GM12878 (cell line): ENCODE measurements at regions of chr15 and their contacts with region 1.

Region 1: DNA sequence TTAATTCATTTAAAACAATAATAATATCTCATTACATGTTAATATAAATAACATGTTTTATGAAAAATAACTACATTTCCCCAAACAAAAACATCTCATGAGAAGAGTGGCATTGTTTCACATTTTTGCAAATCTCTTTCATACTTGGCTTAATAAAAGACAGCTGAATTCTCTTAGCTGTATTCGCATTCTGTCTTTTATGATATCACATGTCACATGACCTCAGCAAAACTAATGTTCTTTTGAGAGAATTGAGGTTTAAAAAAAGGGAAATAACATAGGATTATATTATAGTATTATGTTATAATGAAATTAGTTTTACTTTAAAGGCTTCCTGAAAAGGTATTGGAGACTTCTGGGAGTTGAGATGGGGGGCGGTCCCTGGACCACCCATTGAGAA is 48.4 kb upstream of the SPPL2A start:
- DNase-seq: no peak
- ATAC-seq: no peak
- H3K4me3 ChIP-seq: no peak overlapping the region
- H3K27ac ChIP-seq: no peak overlapping the region
- H3K4me1 ChIP-seq: no peaks in the 10 kb centered on the region
- H3K27me3 ChIP-seq: no peaks in the 10 kb centered on the region
- CTCF ChIP-seq: no peak
- EP300 ChIP-seq: no peak
- POLR2A ChIP-seq: no peak
- RAD21 ChIP-seq: no peak

Region 2: DNA sequence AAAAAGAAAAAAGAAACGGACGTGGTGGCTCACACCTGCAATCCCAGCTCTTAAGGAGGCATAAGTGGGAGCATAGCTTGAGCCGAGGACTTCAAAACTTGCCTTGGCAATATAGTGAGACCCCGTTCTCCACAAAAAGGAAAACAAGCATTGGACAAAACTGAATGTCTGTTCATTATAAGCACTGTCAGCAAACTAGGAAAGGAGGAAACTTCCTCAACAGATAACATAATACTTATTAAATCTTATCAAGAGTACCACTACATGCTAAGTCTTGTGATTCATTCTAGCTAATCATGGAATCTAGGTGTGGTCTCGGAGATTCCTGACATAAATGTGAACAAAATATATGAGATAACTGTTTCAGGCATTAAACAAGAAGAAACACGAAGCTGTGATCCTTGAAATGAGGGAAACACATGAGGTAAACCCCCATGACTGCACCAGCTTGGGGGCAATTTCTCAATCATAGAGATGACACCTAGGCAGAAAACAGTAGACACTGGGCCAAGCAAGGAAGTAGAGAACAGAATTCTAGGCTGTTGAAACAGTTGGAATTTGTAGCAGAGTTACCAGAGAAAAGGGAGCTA is 160.6 kb before region 1 on chr15:
- CTCF ChIA-PET with region 1: no interaction called
- POLR2A ChIA-PET with region 1: interaction called, 10 read pairs
- RAD21 ChIA-PET with region 1: no interaction called
- SMC1A ChIA-PET with region 1: no interaction called
- in situ Hi-C with region 1: no loop called
- intact Hi-C with region 1: no loop called
- DNase-seq: no peak
- ATAC-seq: no peak
- H3K4me3 ChIP-seq: no peak overlapping the region
- H3K27ac ChIP-seq: no peak overlapping the region
- H3K4me1 ChIP-seq: peaks cover 7% of the 10 kb centered on the region
- H3K27me3 ChIP-seq: no peaks in the 10 kb centered on the region
- CTCF ChIP-seq: no peak
- EP300 ChIP-seq: no peak
- POLR2A ChIP-seq: no peak
- RAD21 ChIP-seq: no peak

Region 3: GRCh38 chr15:50744601-50745000 is 69.3 kb before region 1 on chr15:
- CTCF ChIA-PET with region 1: no interaction called
- POLR2A ChIA-PET with region 1: no interaction called
- RAD21 ChIA-PET with region 1: no interaction called
- SMC1A ChIA-PET with region 1: no interaction called
- in situ Hi-C with region 1: no loop called
- intact Hi-C with region 1: no loop called
- DNase-seq: no peak
- ATAC-seq: no peak
- H3K4me3 ChIP-seq: no peak overlapping the region
- H3K27ac ChIP-seq: no peak overlapping the region
- H3K4me1 ChIP-seq: no peaks in the 10 kb centered on the region
- H3K27me3 ChIP-seq: no peaks in the 10 kb centered on the region
- CTCF ChIP-seq: no peak
- EP300 ChIP-seq: no peak
- POLR2A ChIP-seq: no peak
- RAD21 ChIP-seq: no peak

Region 4: DNA sequence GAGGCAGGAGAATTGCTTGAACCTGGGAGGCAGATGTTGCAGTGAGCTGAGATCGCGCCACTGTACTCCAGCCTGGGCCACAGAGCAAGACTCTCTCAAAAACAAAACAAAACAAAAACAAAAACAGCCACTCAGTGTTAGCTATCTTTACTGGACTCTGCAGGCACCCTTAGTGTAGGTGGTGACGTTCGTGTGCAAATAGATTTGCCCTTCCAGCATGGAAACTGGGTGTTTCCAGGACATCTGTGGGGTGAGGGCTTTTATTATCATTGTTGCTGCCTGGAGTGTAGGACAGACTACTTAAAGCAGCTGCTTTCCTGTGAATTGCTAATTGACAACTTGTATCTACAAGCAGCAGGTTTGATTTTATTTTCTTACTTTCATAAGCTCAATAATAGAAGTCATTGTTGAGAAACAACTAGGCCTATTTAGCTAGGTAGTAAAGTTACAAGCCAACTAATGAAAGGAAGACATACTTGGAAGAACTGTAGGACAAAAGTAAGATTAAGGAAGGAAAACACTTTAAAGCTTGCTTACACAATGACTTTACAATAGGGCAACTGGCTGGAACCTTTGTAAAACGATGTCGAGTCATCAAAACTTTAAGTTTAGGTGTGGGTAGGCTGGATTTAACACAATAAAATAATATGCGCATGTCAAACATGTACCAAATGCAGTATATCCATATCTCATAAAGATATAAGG is 22.9 kb before region 1 on chr15:
- CTCF ChIA-PET with region 1: no interaction called
- POLR2A ChIA-PET with region 1: no interaction called
- RAD21 ChIA-PET with region 1: no interaction called
- SMC1A ChIA-PET with region 1: no interaction called
- in situ Hi-C with region 1: no loop called
- intact Hi-C with region 1: no loop called
- DNase-seq: no peak
- ATAC-seq: no peak
- H3K4me3 ChIP-seq: no peak overlapping the region
- H3K27ac ChIP-seq: no peak overlapping the region
- H3K4me1 ChIP-seq: no peaks in the 10 kb centered on the region
- H3K27me3 ChIP-seq: no peaks in the 10 kb centered on the region
- CTCF ChIP-seq: no peak
- EP300 ChIP-seq: no peak
- POLR2A ChIP-seq: no peak
- RAD21 ChIP-seq: no peak